ENCODE measurements at regions of chr17 and their contacts with region 1.

Region 1: DNA sequence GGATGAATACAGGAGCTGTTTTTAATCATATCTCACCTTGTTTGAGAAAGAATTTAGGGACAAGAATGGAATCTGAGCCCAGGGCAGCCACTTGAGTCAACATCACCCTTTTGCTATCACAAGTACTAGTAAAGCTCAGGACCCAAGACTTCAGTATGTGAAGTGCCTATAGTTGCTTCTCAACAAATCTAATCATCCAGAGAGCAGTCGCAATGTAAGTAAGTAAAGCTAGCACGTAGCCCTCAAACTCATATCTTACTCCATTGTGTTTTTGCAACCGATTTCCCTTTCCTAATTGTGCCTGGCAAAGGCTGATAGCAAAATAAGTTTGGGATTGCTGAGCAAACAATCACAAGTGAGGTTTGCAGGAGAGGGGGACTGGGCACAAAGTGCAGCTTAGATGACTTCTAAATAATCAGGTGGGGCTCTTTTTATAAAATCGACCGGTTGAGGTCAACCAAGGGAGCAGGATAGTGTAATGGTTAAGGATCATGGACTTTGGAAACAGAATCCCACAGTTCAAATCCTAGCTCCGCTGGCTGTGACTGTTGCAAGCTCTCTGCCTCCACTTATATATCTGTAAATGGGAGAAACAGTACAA is 13.0 kb downstream of the TOB1 start:
- DNase-seq: no peak
- ATAC-seq: no peak
- H3K4me3 Mint-ChIP-seq: no peak overlapping the region
- H3K27ac Mint-ChIP-seq: no peak overlapping the region
- H3K4me1 Mint-ChIP-seq: peaks cover 15% of the 10 kb centered on the region
- H3K27me3 Mint-ChIP-seq: peaks cover 19% of the 10 kb centered on the region

Region 2: DNA sequence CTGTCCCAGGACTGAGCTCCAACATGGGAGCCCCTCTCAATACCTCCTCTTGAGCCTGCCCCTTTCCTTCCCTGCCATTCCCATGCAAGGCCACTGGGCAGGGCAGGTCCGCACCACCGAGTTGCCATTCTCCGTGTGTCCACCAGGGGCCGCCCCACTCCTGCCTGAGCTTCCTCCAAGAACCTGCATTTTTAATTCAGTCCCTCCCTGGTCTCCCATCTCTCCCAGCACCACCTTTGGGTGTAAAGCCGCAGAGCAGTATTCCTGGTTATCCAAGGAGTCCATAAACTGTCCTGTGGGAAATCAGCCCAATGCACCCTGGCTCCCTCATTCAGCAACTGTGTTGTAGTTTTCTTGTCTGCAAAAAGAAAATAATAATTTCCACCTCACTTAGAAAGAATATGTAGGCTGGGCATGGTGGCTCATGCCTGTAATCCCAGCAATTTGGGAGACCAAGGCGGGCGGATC is 69.9 kb before region 1 on chr17:
- CTCF ChIA-PET with region 1: interaction called, 35 read pairs
- POLR2A ChIA-PET with region 1: no interaction called
- DNase-seq: peak; percentile 85
- ATAC-seq: peak; percentile 67
- H3K4me3 Mint-ChIP-seq: no peak overlapping the region
- H3K27ac Mint-ChIP-seq: no peak overlapping the region
- H3K4me1 Mint-ChIP-seq: peaks cover 32% of the 10 kb centered on the region
- H3K27me3 Mint-ChIP-seq: peaks cover 38% of the 10 kb centered on the region

Region 3: GRCh38 chr17:50872710-50873424 is 19.8 kb after region 1 on chr17:
- CTCF ChIA-PET with region 1: interaction called, 121 read pairs
- POLR2A ChIA-PET with region 1: interaction called, 94 read pairs
- DNase-seq: peak; percentile 53
- ATAC-seq: peak; percentile 56
- H3K4me3 Mint-ChIP-seq: no peak overlapping the region
- H3K27ac Mint-ChIP-seq: peak overlapping the region; percentile 34
- H3K4me1 Mint-ChIP-seq: peaks cover 43% of the 10 kb centered on the region
- H3K27me3 Mint-ChIP-seq: peaks cover 34% of the 10 kb centered on the region

Region 4: DNA sequence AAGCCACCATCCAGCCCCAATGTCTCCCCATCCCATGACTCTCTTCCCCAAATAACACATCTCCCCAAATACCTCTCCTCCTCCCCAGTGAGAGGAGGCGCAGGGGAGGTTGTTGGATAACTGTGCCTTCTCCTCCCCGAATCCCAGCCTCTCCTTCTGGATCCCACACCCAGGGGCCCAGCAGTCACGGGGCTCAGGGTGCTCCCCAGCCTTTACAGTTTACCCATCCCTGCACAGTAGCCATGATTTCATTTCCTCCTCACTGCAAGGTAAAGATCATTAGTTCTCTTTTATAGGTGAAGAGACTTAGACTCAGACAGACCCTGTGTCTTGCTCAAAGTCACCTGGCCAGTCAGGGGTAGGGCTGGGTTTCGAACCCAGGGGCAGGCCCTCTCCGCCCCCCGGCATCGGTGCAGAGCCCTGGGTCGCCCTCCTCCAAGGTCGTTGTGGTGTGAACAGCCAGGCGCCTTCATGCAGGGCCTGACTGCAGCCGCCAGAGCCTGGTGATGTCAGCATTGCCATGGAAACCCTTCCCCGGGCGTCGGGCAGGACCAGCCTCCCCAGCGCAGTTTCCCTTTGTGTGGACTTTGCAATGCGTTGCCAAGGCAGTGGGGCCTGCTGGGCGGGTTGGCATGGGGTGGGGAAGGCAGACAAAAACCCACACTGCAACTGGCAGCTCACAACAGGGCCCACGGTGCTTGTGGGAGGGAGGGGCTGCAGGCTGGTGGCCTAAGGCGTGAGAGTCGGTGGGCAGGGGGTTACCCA is 66.4 kb after region 1 on chr17:
- CTCF ChIA-PET with region 1: interaction called, 12 read pairs
- POLR2A ChIA-PET with region 1: no interaction called
- DNase-seq: peak; percentile 93
- ATAC-seq: peak; percentile 94
- H3K4me3 Mint-ChIP-seq: peak overlapping the region; percentile 47
- H3K27ac Mint-ChIP-seq: peak overlapping the region; percentile 90
- H3K4me1 Mint-ChIP-seq: peaks cover 54% of the 10 kb centered on the region
- H3K27me3 Mint-ChIP-seq: peaks cover 7% of the 10 kb centered on the region

Region 5: GRCh38 chr17:50949989-50950881 is 97.1 kb after region 1 on chr17:
- CTCF ChIA-PET with region 1: interaction called, 351 read pairs
- POLR2A ChIA-PET with region 1: interaction called, 6 read pairs
- DNase-seq: peak; percentile 59
- ATAC-seq: peak; percentile 74
- H3K4me3 Mint-ChIP-seq: no peak overlapping the region
- H3K27ac Mint-ChIP-seq: no peak overlapping the region
- H3K4me1 Mint-ChIP-seq: peaks cover 51% of the 10 kb centered on the region
- H3K27me3 Mint-ChIP-seq: no peaks in the 10 kb centered on the region

Region 6: DNA sequence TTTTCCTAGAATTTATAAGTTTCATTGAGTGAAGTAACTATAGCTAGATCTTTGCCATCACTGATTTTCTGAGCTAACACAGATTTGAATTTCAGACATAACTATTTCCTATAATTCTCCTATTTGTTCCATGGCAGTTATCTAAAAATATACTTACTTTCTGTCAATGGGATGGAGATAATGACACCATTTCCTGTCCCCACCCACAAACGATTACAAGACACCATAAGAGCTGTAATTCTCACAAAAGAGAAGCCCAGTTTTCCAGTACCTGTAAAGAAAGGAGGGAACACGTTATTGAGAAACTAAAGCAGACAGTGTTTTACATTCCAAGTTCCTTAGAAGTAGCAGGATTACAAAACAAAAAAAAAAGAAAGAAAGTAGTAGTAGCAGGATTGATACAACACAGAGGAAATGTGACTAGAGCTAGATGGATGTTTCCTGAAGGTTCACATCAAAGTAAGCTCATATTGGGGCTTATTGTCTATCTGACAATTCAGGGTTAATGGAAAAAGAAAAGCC is 123.9 kb after region 1 on chr17:
- CTCF ChIA-PET with region 1: interaction called, 14 read pairs
- POLR2A ChIA-PET with region 1: no interaction called
- DNase-seq: no peak
- ATAC-seq: peak; percentile 36
- H3K4me3 Mint-ChIP-seq: no peak overlapping the region
- H3K27ac Mint-ChIP-seq: peak overlapping the region; percentile 91
- H3K4me1 Mint-ChIP-seq: peaks cover 21% of the 10 kb centered on the region
- H3K27me3 Mint-ChIP-seq: no peaks in the 10 kb centered on the region

Region 7: DNA sequence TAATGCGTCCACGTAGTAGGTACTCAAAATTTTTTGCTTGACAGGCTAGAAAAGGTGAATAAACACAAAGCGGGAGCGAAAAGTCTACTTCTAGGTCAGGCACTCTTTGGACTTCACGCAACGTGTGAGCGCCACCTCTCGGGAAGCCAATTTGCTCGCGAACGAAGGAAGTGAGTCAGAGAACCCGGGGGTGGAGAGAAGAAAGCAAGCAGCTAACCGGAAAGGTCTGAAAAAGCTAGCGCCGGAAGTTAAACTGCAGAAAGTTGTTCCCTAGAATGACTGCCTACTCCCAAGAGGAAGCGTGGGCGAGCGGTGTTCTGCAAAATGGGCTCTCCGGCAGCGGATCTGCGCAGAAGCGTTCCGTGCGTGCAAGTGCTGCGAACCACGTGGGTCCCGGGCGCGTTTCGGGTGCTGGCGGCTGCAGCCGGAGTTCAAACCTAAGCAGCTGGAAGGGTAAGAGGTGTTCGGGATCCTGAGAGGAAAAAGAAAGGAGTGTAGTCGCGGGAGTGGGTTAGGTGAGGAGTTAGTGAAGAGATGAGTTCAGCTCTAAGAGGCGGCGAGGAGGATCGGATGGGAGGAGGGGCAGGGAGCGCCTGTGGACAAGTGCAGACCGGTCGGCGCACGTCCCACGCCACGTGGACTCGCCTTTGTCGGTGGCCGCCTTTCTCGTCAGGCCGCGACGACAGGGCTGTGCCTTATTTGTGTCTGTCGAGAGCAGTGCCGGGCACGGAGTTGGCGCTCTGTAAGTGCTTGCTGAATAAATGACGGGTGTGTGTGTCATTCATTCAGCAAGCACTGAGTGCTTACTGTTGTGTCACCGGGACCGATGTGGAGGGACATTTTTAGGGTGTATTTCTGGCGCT is 300.3 kb after region 1 on chr17 and contains the start of gene NME1:
- CTCF ChIA-PET with region 1: interaction called, 14 read pairs
- POLR2A ChIA-PET with region 1: no interaction called
- DNase-seq: peak; percentile 98
- ATAC-seq: peak; percentile 95
- H3K4me3 Mint-ChIP-seq: no peak within 1 kb of the TSS
- H3K27ac Mint-ChIP-seq: no peak within 1 kb of the TSS
- H3K4me1 Mint-ChIP-seq: peaks cover 12% of the 10 kb centered on the region
- H3K27me3 Mint-ChIP-seq: no peaks in the 10 kb centered on the region
- total RNA-seq, gene NME1: 148 to 150 TPM

Measured in activated CD8-positive, alpha-beta T cell treated with anti-CD3 and anti-CD28 coated beads, Interleukin-2, amount 10 ng/mL, durations not matched to agents 7 days and 5 days (primary cell).